CD8-positive, alpha-beta T cell (primary cell): ENCODE measurements at regions of chr10 and their contacts with region 1.

Region 1: GRCh38 chr10:103416436-103417147 is 20.2 kb downstream of the PDCD11 start:
- DNase-seq: peak; percentile 31 to 81 (median 70)
- ATAC-seq: peak; percentile 40
- H3K4me3 ChIP-seq: no peak overlapping the region
- H3K4me3 Mint-ChIP-seq: no peak overlapping the region
- H3K27ac ChIP-seq: no peak overlapping the region
- H3K27ac Mint-ChIP-seq: no peak overlapping the region
- H3K4me1 ChIP-seq: no peaks in the 10 kb centered on the region
- H3K4me1 Mint-ChIP-seq: peaks cover 3% of the 10 kb centered on the region
- H3K27me3 ChIP-seq: no peaks in the 10 kb centered on the region
- H3K27me3 Mint-ChIP-seq: no peaks in the 10 kb centered on the region
- CTCF ChIP-seq: peak; percentile 75

Region 2: GRCh38 chr10:103192089-103192450 is 224.5 kb before region 1 on chr10:
- CTCF ChIA-PET with region 1: no interaction called
- POLR2A ChIA-PET with region 1: no interaction called
- intact Hi-C with region 1: no loop called
- DNase-seq: no peak
- ATAC-seq: no peak
- H3K4me3 ChIP-seq: peak overlapping the region; percentile 68 to 85
- H3K4me3 Mint-ChIP-seq: peak overlapping the region; percentile 97
- H3K27ac ChIP-seq: peak overlapping the region; percentile 76 to 88
- H3K27ac Mint-ChIP-seq: peak overlapping the region; percentile 96
- H3K4me1 ChIP-seq: peaks cover 25% of the 10 kb centered on the region
- H3K4me1 Mint-ChIP-seq: peaks cover 41% of the 10 kb centered on the region
- H3K27me3 ChIP-seq: no peaks in the 10 kb centered on the region
- H3K27me3 Mint-ChIP-seq: no peaks in the 10 kb centered on the region
- CTCF ChIP-seq: no peak

Region 3: GRCh38 chr10:103202319-103202718 is 214.3 kb before region 1 on chr10:
- CTCF ChIA-PET with region 1: no interaction called
- POLR2A ChIA-PET with region 1: no interaction called
- intact Hi-C with region 1: no loop called
- DNase-seq: no peak
- ATAC-seq: no peak
- H3K4me3 ChIP-seq: no peak overlapping the region
- H3K4me3 Mint-ChIP-seq: no peak overlapping the region
- H3K27ac ChIP-seq: no peak overlapping the region
- H3K27ac Mint-ChIP-seq: no peak overlapping the region
- H3K4me1 ChIP-seq: no peaks in the 10 kb centered on the region
- H3K4me1 Mint-ChIP-seq: no peaks in the 10 kb centered on the region
- H3K27me3 ChIP-seq: no peaks in the 10 kb centered on the region
- H3K27me3 Mint-ChIP-seq: no peaks in the 10 kb centered on the region
- CTCF ChIP-seq: no peak

Region 4: DNA sequence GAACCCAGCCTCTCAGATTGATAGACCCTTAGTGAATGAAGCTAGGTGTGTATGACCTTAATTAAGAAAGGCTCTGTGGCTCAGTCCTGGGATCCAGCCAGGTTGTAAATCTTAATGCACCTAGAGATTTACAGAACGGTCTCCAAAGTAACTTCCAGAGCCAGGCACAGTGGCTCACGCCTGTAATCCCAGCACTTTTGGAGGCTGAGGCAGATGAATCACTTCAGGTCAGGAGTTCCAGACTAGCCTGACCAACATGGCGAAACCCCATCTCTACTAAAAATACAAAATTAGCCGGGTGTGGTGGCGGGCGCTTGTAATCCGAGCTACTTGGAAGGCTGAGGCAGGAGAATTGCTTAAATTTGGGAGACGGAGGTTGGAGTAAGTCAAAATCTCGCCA is 11.3 kb after region 1 on chr10:
- CTCF ChIA-PET with region 1: interaction called, 24 read pairs
- POLR2A ChIA-PET with region 1: no interaction called
- intact Hi-C with region 1: no loop called
- DNase-seq: no peak
- ATAC-seq: no peak
- H3K4me3 ChIP-seq: no peak overlapping the region
- H3K4me3 Mint-ChIP-seq: no peak overlapping the region
- H3K27ac ChIP-seq: no peak overlapping the region
- H3K27ac Mint-ChIP-seq: no peak overlapping the region
- H3K4me1 ChIP-seq: peaks cover 22% of the 10 kb centered on the region
- H3K4me1 Mint-ChIP-seq: peaks cover 28% of the 10 kb centered on the region
- H3K27me3 ChIP-seq: no peaks in the 10 kb centered on the region
- H3K27me3 Mint-ChIP-seq: no peaks in the 10 kb centered on the region
- CTCF ChIP-seq: no peak

Region 5: DNA sequence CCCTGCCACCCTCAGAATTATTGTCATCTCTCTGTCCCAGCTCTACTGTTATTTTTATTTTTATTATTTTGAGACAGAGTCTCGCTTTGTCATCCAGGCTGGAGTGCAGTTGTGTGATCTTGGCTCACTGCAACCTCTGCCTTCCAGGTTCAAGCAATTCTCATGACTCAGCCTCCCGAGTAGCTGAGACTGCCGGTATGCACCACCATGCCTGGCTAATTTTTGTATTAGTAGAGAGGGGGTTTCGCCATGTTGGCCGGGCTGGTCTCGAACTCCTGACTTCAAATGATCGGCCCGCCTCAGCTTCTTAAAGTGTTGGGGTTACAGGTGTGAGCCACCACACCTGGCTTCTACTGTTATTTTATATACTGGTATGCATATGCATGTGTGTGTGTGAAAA is 24.6 kb after region 1 on chr10:
- CTCF ChIA-PET with region 1: interaction called, 20 read pairs
- POLR2A ChIA-PET with region 1: no interaction called
- intact Hi-C with region 1: no loop called
- DNase-seq: no peak
- ATAC-seq: no peak
- H3K4me3 ChIP-seq: no peak overlapping the region
- H3K4me3 Mint-ChIP-seq: no peak overlapping the region
- H3K27ac ChIP-seq: no peak overlapping the region
- H3K27ac Mint-ChIP-seq: no peak overlapping the region
- H3K4me1 ChIP-seq: no peaks in the 10 kb centered on the region
- H3K4me1 Mint-ChIP-seq: peaks cover 2% of the 10 kb centered on the region
- H3K27me3 ChIP-seq: no peaks in the 10 kb centered on the region
- H3K27me3 Mint-ChIP-seq: no peaks in the 10 kb centered on the region
- CTCF ChIP-seq: no peak

Region 6: GRCh38 chr10:103451831-103452505 is 35.4 kb after region 1 on chr10 and contains the start of gene CALHM2:
- CTCF ChIA-PET with region 1: interaction called, 15 read pairs
- POLR2A ChIA-PET with region 1: no interaction called
- intact Hi-C with region 1: no loop called
- DNase-seq: peak; percentile 18 to 81 (median 57)
- ATAC-seq: peak; percentile 70
- H3K4me3 ChIP-seq: peak within 1 kb of the TSS; percentile 78 to 97
- H3K4me3 Mint-ChIP-seq: peak within 1 kb of the TSS; percentile 92
- H3K27ac ChIP-seq: peak within 1 kb of the TSS; percentile 43 to 76
- H3K27ac Mint-ChIP-seq: peak within 1 kb of the TSS; percentile 84
- H3K4me1 ChIP-seq: peaks cover 45% of the 10 kb centered on the region
- H3K4me1 Mint-ChIP-seq: peaks cover 51% of the 10 kb centered on the region
- H3K27me3 ChIP-seq: no peaks in the 10 kb centered on the region
- H3K27me3 Mint-ChIP-seq: no peaks in the 10 kb centered on the region
- CTCF ChIP-seq: no peak
- total RNA-seq, gene CALHM2: 1.6 to 1.7 TPM

Region 7: DNA sequence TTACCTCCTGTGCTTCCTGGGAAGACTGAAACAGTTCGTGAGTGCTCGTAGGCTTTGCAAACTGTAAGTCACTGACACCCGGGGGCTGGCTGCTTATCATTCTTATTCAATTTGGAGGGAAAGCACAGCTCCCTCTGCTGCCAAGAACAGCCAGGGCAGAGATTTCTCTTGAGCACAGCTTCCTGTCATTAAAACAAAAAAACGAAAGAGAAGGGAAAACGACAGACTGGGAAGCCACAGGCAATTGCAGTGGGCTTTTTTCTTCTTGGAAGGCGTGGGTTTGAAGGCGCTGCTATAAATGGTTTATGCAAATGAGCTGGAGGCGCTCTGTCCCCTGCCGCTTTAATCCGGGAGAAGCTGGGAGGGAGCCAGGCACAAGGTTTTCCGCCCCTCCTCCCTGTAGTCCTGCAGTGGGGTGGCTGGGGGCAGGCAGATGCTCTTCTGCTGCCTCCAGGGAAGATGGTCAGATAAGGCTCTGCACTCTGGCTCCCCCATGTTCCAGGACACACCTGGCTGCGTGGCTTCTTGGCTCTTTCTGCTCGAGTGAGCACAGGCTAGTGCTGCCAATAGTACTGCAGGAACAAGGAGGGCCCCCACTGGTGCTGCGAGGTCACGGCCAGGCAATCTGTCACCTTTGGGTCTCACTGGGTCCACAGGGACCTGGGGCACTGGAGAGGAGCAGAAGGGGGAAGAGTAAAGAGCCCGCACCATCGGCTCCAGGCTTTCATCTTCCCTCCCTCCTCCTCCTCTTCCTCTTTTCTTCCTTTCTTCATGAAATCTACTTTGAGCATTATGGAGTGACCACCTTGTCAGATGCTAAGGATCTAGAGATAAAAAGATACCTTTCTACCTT is 126.4 kb after region 1 on chr10:
- CTCF ChIA-PET with region 1: interaction called, 3 read pairs
- POLR2A ChIA-PET with region 1: no interaction called
- intact Hi-C with region 1: loop called in 1 of 2 experiments (anchors 2 kb)
- DNase-seq: peak in 6 of 9 experiments; percentile 19 to 55 (median 36)
- ATAC-seq: peak; percentile 38
- H3K4me3 ChIP-seq: peak overlapping the region; percentile 24 to 58
- H3K4me3 Mint-ChIP-seq: peak overlapping the region; percentile 83
- H3K27ac ChIP-seq: no peak overlapping the region
- H3K27ac Mint-ChIP-seq: no peak overlapping the region
- H3K4me1 ChIP-seq: peaks cover 12% of the 10 kb centered on the region
- H3K4me1 Mint-ChIP-seq: peaks cover 12% of the 10 kb centered on the region
- H3K27me3 ChIP-seq: no peaks in the 10 kb centered on the region
- H3K27me3 Mint-ChIP-seq: peaks cover 12% of the 10 kb centered on the region
- CTCF ChIP-seq: peak; percentile 38

Region 8: DNA sequence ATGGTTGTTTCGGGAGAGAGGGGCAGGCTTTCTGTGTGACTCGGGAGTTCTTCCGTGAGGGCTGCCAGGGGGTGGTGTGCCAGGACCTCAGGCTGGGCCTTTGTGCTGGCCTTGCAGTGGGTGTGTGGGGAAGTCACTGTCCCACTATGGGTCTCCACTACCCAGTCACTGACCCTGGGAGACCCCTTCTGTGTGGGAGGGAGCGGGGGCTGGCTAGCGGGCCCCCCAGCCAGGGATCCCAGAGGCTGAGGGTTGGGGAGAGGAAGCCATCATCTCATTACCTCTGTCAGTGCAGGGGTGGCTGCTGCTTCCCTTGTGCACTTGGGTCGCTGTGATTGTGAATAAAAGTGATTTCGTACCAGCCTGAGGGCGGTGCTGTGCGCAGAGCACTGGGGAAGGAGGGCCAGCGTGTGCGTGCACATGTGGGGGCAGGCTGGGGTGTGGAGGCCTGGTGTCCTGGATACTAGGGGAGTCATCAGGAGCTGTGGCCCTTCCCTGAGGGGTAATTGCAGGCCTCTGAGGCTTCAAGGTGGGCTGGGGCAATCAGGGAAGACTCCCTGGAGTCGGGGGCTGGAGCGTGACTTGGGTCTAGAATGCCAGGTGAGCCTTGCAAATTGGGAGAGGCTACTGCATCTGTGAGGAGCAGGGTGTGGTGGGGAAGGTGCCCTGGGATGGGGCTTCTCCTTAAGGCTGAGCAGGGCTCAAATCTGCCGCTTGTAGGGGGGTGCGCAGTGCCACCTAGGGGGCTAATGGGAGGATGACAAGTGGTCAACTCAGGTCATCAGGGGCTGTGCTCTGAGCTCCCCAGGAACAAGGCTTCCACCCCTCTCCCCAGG is 175.8 kb after region 1 on chr10:
- CTCF ChIA-PET with region 1: interaction called, 3 read pairs
- POLR2A ChIA-PET with region 1: no interaction called
- intact Hi-C with region 1: loop called in 1 of 2 experiments (anchors 2 kb)
- DNase-seq: peak in 7 of 9 experiments; percentile 24 to 56 (median 37)
- ATAC-seq: peak; percentile 85
- H3K4me3 ChIP-seq: no peak overlapping the region
- H3K4me3 Mint-ChIP-seq: no peak overlapping the region
- H3K27ac ChIP-seq: no peak overlapping the region
- H3K27ac Mint-ChIP-seq: no peak overlapping the region
- H3K4me1 ChIP-seq: no peaks in the 10 kb centered on the region
- H3K4me1 Mint-ChIP-seq: no peaks in the 10 kb centered on the region
- H3K27me3 ChIP-seq: no peaks in the 10 kb centered on the region
- H3K27me3 Mint-ChIP-seq: no peaks in the 10 kb centered on the region
- CTCF ChIP-seq: peak; percentile 40

Region 9: GRCh38 chr10:104589871-104590270 is 1173.3 kb after region 1 on chr10:
- CTCF ChIA-PET with region 1: no interaction called
- POLR2A ChIA-PET with region 1: no interaction called
- intact Hi-C with region 1: no loop called
- DNase-seq: no peak
- ATAC-seq: no peak
- H3K4me3 ChIP-seq: no peak overlapping the region
- H3K4me3 Mint-ChIP-seq: no peak overlapping the region
- H3K27ac ChIP-seq: no peak overlapping the region
- H3K27ac Mint-ChIP-seq: no peak overlapping the region
- H3K4me1 ChIP-seq: peaks cover 15% of the 10 kb centered on the region
- H3K4me1 Mint-ChIP-seq: peaks cover 22% of the 10 kb centered on the region
- H3K27me3 ChIP-seq: no peaks in the 10 kb centered on the region
- H3K27me3 Mint-ChIP-seq: peaks cover 18% of the 10 kb centered on the region
- CTCF ChIP-seq: no peak